ENCODE measurements at regions of chr18 and their contacts with region 1.

Region 1: DNA sequence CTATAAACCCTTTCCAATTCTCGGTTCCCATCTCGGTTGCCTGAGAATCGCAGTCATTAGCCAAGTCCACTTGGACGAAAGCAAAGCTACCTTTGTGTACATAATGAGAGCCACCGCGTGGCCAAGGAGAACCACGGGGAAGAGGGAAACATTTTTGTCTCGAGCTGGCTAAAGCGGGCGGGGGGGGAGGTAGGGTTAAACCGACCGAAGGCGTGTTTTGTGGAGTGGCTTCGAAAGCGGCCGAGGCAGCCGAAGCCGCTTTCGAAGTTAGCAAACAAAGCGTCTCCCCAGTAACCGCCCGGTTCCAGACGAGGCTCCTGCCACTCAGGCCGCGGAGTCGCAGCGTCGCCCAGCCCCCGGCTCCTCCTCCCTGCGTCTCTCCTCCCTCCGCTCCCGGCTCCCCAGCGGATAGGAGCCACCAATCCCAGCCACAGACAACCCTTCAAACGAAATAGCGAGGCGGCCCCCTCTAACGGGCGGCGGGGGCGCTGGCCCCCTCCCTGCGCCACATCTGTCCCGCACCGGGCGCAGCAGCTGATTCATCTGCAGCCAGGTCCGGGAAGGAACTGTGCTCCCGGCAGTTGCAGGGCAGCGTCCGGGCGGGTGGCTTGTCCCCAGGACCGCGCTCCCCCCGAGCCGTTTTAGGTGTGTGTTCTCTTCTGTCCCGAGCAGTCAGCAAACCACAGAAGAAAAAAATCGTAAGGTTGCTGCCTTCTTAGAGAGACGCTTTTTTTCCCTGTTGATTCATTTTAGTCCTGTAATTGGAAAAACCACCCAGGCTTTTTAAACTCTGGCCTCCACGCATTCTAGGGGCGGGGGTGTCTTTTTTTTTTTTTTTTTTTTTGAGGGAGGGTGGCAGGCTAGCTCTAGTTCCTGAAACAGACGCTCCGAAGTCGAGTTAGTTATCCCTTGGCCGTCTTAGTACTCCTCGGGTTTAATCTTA is 1.8 kb upstream of the TGIF1 start:
- DNase-seq: peak; percentile 90
- H3K4me3 Mint-ChIP-seq: peak overlapping the region; percentile 89
- H3K27ac Mint-ChIP-seq: peak overlapping the region; percentile 98
- H3K4me1 Mint-ChIP-seq: peaks cover 30% of the 10 kb centered on the region
- H3K27me3 Mint-ChIP-seq: no peaks in the 10 kb centered on the region

Region 2: DNA sequence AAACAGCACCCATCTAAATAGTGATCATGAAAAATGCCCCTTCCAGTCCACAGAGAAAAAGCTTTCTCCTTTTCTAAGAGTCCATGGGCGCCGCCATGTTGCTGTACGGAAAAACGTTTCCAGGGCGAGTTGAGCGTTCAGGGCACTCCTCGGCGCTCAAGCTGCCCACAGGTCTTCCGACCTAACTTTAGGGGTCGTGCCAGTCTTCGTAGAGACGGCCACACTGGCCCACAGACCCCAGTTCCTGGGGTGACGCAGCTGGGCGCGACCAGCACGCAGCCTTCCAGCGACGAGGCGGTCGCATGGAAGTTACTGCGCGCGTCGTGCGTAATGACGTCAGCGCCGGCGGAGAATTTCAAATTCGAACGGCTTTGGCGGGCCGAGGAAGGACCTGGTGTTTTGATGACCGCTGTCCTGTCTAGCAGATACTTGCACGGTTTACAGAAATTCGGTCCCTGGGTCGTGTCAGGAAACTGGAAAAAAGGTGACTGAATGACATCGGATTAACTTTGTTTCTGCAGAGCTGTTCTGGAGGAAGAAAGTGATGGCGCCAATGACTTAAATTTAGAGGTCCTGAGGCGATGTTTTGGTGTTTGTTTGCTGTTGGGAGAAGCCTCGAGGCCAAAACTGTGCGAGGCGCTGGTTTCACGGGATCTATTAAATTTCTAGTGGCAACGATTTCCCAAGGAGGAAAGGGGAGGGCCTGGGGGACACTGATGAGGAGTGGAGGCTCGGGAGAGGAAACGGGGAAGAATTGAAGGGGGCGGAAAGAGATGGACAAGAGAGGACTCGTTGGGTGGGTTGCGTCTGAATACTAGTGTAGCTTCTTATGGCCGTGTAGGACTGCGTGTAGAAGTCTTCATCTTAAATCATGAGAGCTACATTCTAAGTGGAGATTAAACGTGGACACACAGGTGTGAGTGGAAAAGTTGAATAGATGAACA is 876.7 kb before region 1 on chr18 and contains the starts of genes METTL4 and NDC80:
- CTCF ChIA-PET with region 1: no interaction called
- intact Hi-C with region 1: loop called (anchors 10 kb)
- DNase-seq: peak; percentile 90
- H3K4me3 Mint-ChIP-seq: peak within 1 kb of the TSS; percentile 97
- H3K27ac Mint-ChIP-seq: peak within 1 kb of the TSS; percentile 98
- H3K4me1 Mint-ChIP-seq: peaks cover 49% of the 10 kb centered on the region
- H3K27me3 Mint-ChIP-seq: no peaks in the 10 kb centered on the region
- total RNA-seq, gene METTL4: 19.4 to 20.6 TPM
- total RNA-seq, gene NDC80: 96.8 to 108 TPM

Region 3: GRCh38 chr18:2978646-2979045 is 469.5 kb before region 1 on chr18:
- CTCF ChIA-PET with region 1: no interaction called
- intact Hi-C with region 1: loop called (anchors 5 kb)
- DNase-seq: peak; percentile 66
- H3K4me3 Mint-ChIP-seq: peak overlapping the region; percentile 54
- H3K27ac Mint-ChIP-seq: peak overlapping the region; percentile 92
- H3K4me1 Mint-ChIP-seq: peaks cover 91% of the 10 kb centered on the region
- H3K27me3 Mint-ChIP-seq: no peaks in the 10 kb centered on the region

Region 4: GRCh38 chr18:3297025-3297984 is 150.9 kb before region 1 on chr18:
- CTCF ChIA-PET with region 1: interaction called, 24 read pairs
- intact Hi-C with region 1: loop called (anchors 1 kb)
- DNase-seq: peak; percentile 98
- H3K4me3 Mint-ChIP-seq: peak overlapping the region; percentile 93
- H3K27ac Mint-ChIP-seq: peak overlapping the region; percentile 79
- H3K4me1 Mint-ChIP-seq: peaks cover 3% of the 10 kb centered on the region
- H3K27me3 Mint-ChIP-seq: peaks cover 11% of the 10 kb centered on the region

Region 5: DNA sequence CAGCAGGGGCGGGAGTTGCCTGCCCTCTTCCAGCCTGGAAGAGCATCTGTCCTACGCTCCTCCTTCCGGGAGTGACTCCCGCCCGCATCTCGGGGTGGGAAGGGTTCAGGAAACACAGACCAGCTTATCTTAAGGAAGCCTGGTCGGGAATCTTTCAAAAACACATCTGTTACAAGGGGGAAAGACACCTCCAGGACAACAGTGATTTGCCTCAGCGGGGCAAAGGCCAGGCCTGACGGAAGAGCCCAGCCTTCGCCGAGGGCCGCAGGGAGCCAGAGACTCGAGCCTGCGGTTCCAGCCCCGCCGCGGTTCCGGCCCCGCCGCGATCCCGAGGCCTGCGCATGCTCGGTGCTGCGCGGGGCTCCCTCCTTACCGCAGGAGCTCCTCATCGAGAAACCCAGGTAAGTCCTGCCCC is 36.3 kb before region 1 on chr18:
- CTCF ChIA-PET with region 1: no interaction called
- intact Hi-C with region 1: loop called (anchors 1 kb)
- DNase-seq: peak; percentile 35
- H3K4me3 Mint-ChIP-seq: peak overlapping the region; percentile 46
- H3K27ac Mint-ChIP-seq: no peak overlapping the region
- H3K4me1 Mint-ChIP-seq: peaks cover 19% of the 10 kb centered on the region
- H3K27me3 Mint-ChIP-seq: no peaks in the 10 kb centered on the region

Region 6: GRCh38 chr18:3623769-3624545 is 175.8 kb after region 1 on chr18:
- CTCF ChIA-PET with region 1: no interaction called
- intact Hi-C with region 1: loop called (anchors 1 kb)
- DNase-seq: peak; percentile 44
- H3K4me3 Mint-ChIP-seq: peak overlapping the region; percentile 28
- H3K27ac Mint-ChIP-seq: peak overlapping the region; percentile 86
- H3K4me1 Mint-ChIP-seq: peaks cover 32% of the 10 kb centered on the region
- H3K27me3 Mint-ChIP-seq: no peaks in the 10 kb centered on the region

Measured in activated naive CD4-positive, alpha-beta T cell treated with anti-CD3 and anti-CD28 coated beads for 36 hours (primary cell).